Activated CD4-positive, alpha-beta memory T cell treated with anti-CD3 and anti-CD28 coated beads for 36 hours (primary cell): ENCODE measurements at regions of chr20 and their contacts with region 1.

Region 1: GRCh38 chr20:10427060-10427692 is 6.8 kb downstream of the MKKS start:
- DNase-seq: peak; percentile 50
- H3K4me3 Mint-ChIP-seq: no peak overlapping the region
- H3K27ac Mint-ChIP-seq: no peak overlapping the region
- H3K4me1 Mint-ChIP-seq: peaks cover 34% of the 10 kb centered on the region
- H3K27me3 Mint-ChIP-seq: no peaks in the 10 kb centered on the region

Region 2: DNA sequence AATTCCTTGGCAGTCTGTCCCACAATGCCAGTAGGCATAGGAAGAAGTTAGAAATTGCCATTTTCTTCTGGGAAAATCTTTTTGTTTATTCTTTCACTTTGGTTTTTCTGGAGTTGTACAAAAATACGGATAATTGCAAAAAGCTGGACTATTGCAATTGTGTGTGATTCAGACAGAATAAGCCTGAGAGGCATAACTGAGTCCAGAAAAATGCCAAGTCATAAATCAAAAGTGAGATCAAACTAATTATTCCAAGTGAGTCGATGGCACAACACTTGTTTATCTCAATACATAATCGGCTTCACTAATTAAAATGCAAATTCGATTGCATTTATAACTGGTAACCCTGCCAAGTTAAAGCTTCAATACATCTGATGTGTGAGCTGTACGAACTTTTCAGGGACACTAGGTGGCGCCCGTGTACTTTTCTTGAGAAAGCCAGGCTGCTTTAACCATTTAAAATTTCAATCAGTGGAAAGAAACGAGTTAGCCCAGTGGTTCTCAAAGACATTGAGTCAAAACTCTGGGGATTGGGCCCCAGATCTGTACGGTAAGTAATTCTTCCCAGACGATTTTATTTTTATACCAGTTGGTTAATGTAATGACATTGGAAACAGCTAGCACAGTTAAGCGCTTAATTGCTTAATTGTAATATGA is 810.2 kb before region 1 on chr20:
- CTCF ChIA-PET with region 1: interaction called, 6 read pairs
- POLR2A ChIA-PET with region 1: no interaction called
- intact Hi-C with region 1: loop called (anchors 2 kb)
- DNase-seq: peak; percentile 60
- H3K4me3 Mint-ChIP-seq: no peak overlapping the region
- H3K27ac Mint-ChIP-seq: no peak overlapping the region
- H3K4me1 Mint-ChIP-seq: no peaks in the 10 kb centered on the region
- H3K27me3 Mint-ChIP-seq: peaks cover 3% of the 10 kb centered on the region

Region 3: GRCh38 chr20:10412591-10413408 is 14.4 kb before region 1 on chr20:
- CTCF ChIA-PET with region 1: interaction called, 11 read pairs
- POLR2A ChIA-PET with region 1: no interaction called
- intact Hi-C with region 1: no loop called
- DNase-seq: no peak
- H3K4me3 Mint-ChIP-seq: no peak overlapping the region
- H3K27ac Mint-ChIP-seq: no peak overlapping the region
- H3K4me1 Mint-ChIP-seq: peaks cover 2% of the 10 kb centered on the region
- H3K27me3 Mint-ChIP-seq: no peaks in the 10 kb centered on the region